HEK293 (cell line): ENCODE measurements at regions of chr1 and their contacts with region 1.

Region 1: GRCh38 chr1:227787513-227788270 is 27.8 kb upstream of the PRSS38 start:
- H3K4me3 ChIP-seq: peak overlapping the region; percentile 65
- H3K27ac ChIP-seq: no peak overlapping the region
- H3K4me1 ChIP-seq: peaks cover 3% of the 10 kb centered on the region; the same call in 1 of the 2 replicates
- CTCF ChIP-seq: no peak

Region 2: GRCh38 chr1:227816750-227817446 is 29.2 kb after region 1 on chr1:
- CTCF ChIA-PET with region 1: no interaction called
- POLR2A ChIA-PET with region 1: interaction called, 18 read pairs
- H3K4me3 ChIP-seq: no peak overlapping the region
- H3K27ac ChIP-seq: no peak overlapping the region
- H3K4me1 ChIP-seq: no peaks in the 10 kb centered on the region
- CTCF ChIP-seq: no peak

Region 3: GRCh38 chr1:227844320-227845146 is 56.8 kb after region 1 on chr1:
- CTCF ChIA-PET with region 1: no interaction called
- POLR2A ChIA-PET with region 1: no interaction called
- H3K4me3 ChIP-seq: no peak overlapping the region
- H3K27ac ChIP-seq: no peak overlapping the region
- H3K4me1 ChIP-seq: no peaks in the 10 kb centered on the region
- CTCF ChIP-seq: no peak

Region 4: DNA sequence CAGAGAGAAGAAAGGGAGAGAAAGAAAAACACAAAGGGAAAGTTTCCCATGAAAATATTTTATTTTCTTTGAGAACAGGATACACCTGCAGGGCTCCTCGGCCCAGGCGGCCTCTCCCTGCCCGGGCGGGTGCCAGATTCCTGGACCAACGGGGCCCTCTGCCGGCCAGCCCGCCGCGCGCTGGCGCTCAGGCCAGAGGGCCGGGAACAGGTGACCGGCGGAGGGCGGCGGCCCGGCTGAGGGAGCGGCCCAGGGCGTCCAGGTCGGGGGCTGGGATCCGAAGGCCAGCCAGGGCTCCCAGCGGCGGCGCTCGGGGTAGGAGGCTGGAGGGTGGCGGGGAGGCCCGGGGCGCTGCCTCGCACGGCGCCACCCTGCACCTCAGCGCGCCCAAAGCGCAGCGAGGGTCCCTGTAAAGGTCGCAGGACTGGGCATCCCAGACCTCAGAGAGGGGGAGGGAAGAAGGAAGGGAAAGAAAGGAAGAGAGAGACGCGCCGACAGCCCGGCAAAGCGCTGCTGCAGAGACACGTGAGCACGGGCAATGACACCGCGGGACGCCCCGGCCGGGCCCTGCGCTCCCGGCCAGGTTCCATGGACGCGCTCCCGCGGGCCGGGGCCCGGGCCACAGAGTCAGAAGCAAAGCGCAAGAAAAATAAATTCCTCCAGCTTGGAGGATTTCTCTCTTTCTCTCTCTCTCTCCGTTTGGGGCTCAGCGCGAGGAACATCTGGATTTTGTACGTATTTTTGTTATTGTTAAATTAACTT is 159.1 kb after region 1 on chr1:
- CTCF ChIA-PET with region 1: interaction called, 3 read pairs
- POLR2A ChIA-PET with region 1: interaction called, 19 read pairs
- H3K4me3 ChIP-seq: peak overlapping the region; percentile 51
- H3K27ac ChIP-seq: peak overlapping the region; percentile 40; the same call in 1 of the 2 replicates
- H3K4me1 ChIP-seq: peaks cover 14% of the 10 kb centered on the region
- CTCF ChIP-seq: peak; percentile 80; the same call in 1 of the 2 replicates